A549 (cell line): ENCODE measurements at regions of chr20 and their contacts with region 1.

Region 1: DNA sequence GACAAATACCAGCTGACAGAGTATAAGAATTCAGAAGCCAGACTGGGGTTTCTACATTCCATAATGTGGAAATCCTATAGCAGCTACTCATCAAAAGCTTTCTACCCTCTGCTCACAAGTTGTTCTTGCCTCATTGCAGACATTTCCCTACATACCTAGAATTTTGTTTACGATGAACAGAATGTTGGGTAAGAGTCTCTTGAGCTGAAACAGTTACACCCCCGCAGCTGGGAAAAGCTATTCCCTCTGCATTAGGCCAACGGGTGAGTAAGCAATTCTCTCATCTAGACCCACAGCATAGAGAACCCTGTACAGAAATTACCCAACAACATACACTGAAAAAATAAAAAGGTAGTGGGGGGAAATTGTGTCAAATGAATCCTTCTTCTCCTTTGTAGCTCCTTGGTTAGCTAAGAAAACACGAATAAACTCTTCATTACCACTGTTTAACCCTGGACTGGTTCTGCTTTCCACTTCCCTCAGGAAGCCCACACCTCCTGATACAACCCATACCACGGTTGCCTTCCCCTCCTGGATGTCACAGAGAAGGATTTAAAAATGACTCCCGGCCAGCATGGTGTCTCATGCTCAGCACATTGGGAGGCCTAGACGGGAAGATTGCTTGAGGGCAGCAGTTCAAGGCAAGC is 215.0 kb upstream of the SHLD1 start:
- DNase-seq: peak in 1 of 2 experiments; percentile 60
- ATAC-seq: peak; percentile 26 to 44; a peak in 5 of 6 replicates
- H3K4me3 ChIP-seq: no peak overlapping the region
- H3K27ac ChIP-seq: peak overlapping the region; percentile 47 to 65; a peak in 5 of 6 replicates
- H3K4me1 ChIP-seq: peaks cover 22% of the 10 kb centered on the region
- CTCF ChIP-seq: no peak
- EP300 ChIP-seq: no peak
- POLR2A ChIP-seq: no peak
- RAD21 ChIP-seq: no peak

Region 2: DNA sequence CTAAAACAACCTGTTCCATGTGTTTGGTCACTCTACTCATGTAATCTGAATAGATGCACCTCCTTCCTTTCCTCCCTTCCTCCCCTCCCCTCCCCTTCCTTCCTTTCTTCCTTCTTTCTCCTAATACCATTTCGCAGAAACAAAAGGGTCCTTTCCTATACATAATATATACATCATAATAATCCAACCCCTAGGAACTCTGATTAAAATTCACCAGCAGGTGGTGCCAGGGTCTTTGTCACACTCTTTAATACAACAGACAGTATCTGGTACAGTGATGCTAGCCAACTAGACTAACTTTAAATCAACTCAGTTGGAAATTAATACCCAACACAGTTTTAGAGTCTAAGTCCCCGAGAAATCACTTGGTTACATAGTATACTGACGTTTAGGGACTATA is 33.8 kb after region 1 on chr20:
- CTCF ChIA-PET with region 1: interaction called, 27 read pairs
- POLR2A ChIA-PET with region 1: no interaction called
- DNase-seq: peak; percentile 52 to 75
- ATAC-seq: peak; percentile 86 to 87
- H3K4me3 ChIP-seq: no peak overlapping the region
- H3K27ac ChIP-seq: peak overlapping the region; percentile 10 to 61; a peak in 3 of 6 replicates
- H3K4me1 ChIP-seq: peaks cover 12% of the 10 kb centered on the region; the same call in 2 of the 3 replicates
- CTCF ChIP-seq: peak; percentile 87
- EP300 ChIP-seq: no peak
- POLR2A ChIP-seq: no peak
- RAD21 ChIP-seq: peak; percentile 94 to 97